Motor neuron (in vitro differentiated cells): ENCODE measurements at regions of chr1 and their contacts with region 1.

Region 1: GRCh38 chr1:171017426-171017825 is 73.3 kb upstream of the FMO3 start:
- ATAC-seq: no peak
- H3K4me3 ChIP-seq: no peak overlapping the region
- H3K27ac ChIP-seq: no peak overlapping the region
- H3K4me1 ChIP-seq: no peaks in the 10 kb centered on the region

Region 2: DNA sequence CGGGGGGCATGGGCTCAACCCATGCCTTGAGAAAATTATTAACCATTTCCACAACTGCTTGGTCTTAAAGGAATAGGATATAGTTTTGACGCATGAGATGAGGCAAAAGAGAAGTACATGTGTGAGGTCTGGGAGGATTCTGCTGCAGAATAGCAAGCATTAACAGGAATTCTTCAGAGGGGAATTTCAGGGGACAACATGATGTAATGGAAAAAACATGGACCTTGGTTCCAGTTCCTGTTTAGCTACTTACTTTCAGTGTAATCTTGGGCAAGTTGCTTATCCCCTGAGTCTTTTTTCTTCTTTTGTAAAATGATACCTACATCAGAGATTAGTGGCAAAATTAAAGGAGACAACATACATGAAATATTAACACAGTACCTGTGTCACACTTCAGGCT is 267.9 kb before region 1 on chr1:
- in situ Hi-C with region 1: no loop called
- ATAC-seq: no peak
- H3K4me3 ChIP-seq: no peak overlapping the region
- H3K27ac ChIP-seq: no peak overlapping the region
- H3K4me1 ChIP-seq: no peaks in the 10 kb centered on the region

Region 3: DNA sequence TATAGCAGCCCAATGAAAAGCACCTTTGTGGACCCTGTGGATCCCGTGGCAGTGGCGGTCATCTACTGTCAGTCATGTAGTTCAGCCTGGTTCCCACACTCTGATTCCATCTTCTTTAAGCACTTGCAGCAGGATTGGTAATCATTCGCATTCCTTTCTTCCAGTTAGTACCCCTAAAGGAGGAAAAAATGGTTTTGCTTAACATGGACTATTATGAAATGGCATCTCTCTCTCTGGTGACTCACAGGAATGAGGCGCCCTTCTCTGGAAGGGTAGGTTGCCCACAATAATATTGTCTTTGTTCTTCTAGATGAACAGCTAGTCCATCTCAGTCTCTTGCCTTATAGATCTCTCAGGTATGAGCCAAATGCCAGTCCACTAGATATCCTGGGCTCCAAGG is 210.0 kb before region 1 on chr1:
- in situ Hi-C with region 1: no loop called
- ATAC-seq: no peak
- H3K4me3 ChIP-seq: no peak overlapping the region
- H3K27ac ChIP-seq: no peak overlapping the region
- H3K4me1 ChIP-seq: no peaks in the 10 kb centered on the region

Region 4: GRCh38 chr1:170910273-170910672 is 107.2 kb before region 1 on chr1:
- in situ Hi-C with region 1: loop called in 1 of 9 experiments (anchors 25 kb)
- ATAC-seq: no peak
- H3K4me3 ChIP-seq: no peak overlapping the region
- H3K27ac ChIP-seq: no peak overlapping the region
- H3K4me1 ChIP-seq: no peaks in the 10 kb centered on the region

Region 5: DNA sequence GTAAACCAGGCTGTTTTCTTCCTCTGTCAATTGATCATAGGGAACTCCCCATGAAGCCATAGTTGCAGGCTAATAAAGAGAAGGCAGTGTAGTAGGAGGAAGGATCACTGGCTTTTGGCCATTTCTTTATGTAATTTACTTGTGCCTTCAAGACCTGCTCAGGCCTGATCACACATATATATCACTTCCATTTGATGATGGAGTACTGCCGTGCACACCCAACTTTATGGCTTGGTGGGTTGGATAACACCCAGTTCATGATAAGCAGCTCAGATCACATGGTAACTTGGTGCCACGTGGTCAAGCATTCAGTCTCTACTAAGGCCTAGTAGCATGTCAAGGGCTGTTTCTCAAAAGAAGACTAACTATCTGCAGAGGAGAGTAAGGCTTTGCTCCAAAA is 78.0 kb before region 1 on chr1:
- in situ Hi-C with region 1: no loop called
- ATAC-seq: no peak
- H3K4me3 ChIP-seq: no peak overlapping the region
- H3K27ac ChIP-seq: no peak overlapping the region
- H3K4me1 ChIP-seq: no peaks in the 10 kb centered on the region

Region 6: DNA sequence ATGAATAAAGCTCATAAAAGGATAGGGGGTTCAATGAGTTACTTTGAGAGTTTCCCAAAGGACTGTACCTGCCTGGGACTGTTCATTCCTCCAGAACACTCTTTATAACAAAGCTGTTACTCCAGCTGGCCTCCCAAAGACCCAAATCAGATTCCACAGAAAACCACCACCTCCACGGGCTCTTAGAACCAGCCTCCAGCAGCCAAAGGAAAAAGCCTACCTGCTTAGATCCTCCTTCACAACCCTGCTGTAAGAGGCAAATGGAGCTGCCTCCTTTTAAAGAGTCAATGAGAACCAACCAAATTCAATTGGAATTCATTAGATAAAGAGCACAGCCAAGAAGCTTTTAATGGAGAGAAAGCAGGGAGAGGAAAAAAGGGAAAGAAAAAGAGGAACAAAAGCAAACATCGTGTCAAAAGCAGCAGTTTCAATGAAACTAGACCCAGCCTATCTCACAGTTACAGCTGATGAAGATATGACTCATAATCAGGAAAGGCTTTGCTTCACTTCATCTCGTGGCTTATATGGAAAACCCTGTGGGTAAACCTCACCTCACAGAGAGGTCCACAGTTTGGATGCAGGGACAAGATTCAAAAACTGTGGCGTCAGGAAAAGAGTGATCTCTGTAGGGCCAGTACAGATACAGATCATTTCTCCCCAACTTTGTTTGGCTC is 268.7 kb after region 1 on chr1:
- in situ Hi-C with region 1: loop called in 1 of 9 experiments (anchors 25 kb)
- ATAC-seq: peak in 2 of 8 experiments; percentile 41 to 68
- H3K4me3 ChIP-seq: no peak overlapping the region
- H3K27ac ChIP-seq: no peak overlapping the region
- H3K4me1 ChIP-seq: no peaks in the 10 kb centered on the region